ENCODE measurements at regions of chr15 and their contacts with region 1.

Region 1: DNA sequence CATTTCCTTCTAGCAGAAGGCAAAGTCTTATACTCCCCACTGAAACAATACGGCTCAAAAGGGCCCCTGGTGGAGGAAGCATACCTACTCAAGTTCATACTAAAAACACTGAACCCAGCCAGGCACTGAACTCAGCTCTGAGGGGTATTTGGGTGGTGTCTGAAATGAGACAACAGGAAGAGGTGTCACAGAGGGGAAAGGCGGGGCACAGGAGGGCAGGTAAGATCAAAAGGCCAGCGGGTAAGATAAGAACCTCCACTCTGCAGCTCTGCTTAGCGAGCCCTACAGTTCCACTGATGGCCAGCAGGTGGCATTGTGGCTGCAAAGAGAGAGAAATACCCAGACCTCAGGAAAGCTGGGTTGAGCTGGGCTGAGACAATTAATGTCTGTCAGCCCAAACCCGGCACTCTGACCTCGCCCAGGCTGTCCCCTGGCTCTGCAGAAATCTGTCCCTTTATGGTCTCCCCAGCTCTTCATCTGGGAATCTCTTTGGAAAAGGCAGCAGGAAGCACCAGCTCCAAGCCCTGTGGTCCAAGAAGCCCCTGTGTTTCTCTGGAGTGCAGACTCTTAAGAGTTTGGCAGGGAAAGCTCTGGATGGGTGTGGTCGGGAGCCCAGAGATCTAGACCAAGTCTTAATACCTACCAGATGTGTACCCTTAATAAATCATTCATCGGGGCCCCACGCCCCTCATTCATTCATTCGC is 8.4 kb downstream of the MFGE8 start:
- DNase-seq: peak; percentile 94 to 99 (median 97)
- H3K4me3 ChIP-seq: peak overlapping the region in 1 of 2 donors; percentile 13
- H3K4me3 Mint-ChIP-seq: peak overlapping the region; percentile 25 to 81 (median 58)
- H3K27ac ChIP-seq: peak overlapping the region; percentile 77
- H3K27ac Mint-ChIP-seq: peak overlapping the region; percentile 94 to 98 (median 96)
- H3K4me1 ChIP-seq: peaks cover 38% of the 10 kb centered on the region
- H3K4me1 Mint-ChIP-seq: peaks cover 27 to 65% (median 47%) of the 10 kb centered on the region in 4 donors
- H3K27me3 ChIP-seq: no peaks in the 10 kb centered on the region
- H3K27me3 Mint-ChIP-seq: no peaks in the 10 kb centered on the region

Region 2: DNA sequence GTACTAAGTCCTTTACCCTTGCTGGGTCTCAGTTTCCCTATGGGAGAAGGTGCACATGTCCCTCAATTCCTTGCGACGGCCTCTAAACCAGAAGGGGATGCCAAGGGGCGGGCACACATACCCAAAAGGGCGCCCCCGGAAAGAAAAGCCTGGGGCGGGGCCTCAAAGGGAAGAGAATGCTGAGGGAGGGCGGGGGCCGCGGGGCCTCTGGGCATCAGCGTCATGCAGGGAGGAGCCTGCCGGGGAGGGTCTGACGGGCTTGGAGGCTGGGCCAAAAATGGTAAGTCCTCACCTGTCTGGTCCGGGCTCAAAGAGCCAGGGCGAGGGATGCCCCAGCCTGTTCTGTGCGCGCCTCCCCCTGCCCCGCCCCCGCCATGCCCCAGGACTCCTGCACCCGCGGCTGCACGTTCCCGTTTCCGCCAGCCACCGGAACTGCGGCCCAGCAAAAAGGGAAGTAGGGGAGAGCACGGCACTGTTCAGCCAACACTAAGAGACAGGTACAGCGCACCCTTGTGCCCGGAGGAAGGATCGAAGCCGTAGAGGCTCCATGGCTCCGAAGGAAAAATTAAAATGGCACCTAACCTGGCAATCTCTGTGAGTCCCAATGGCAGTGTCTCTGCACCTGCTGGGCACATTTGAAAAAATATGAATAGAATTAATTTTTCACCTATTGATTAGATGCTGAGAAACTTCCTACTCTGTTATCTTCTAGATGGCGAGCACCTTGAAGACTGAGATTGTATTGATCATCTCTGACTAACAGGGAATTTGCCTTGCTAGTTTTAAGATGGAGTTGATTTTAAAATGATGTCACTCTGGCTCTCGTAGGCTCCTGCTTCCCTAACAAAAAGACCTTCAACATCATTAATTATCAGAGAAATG is 358.3 kb before region 1 on chr15 and contains the start of gene DET1:
- CTCF ChIA-PET with region 1: no interaction called
- POLR2A ChIA-PET with region 1: no interaction called
- intact Hi-C with region 1: loop called (anchors 1 kb)
- DNase-seq: peak; percentile 92 to 97 (median 94)
- H3K4me3 ChIP-seq: peak within 1 kb of the TSS; percentile 34 to 63
- H3K4me3 Mint-ChIP-seq: peak within 1 kb of the TSS; percentile 92 to 95 (median 92)
- H3K27ac ChIP-seq: peak within 1 kb of the TSS; percentile 62
- H3K27ac Mint-ChIP-seq: peak within 1 kb of the TSS; percentile 86 to 97 (median 97)
- H3K4me1 ChIP-seq: peaks cover 9% of the 10 kb centered on the region
- H3K4me1 Mint-ChIP-seq: peaks cover 4 to 23% (median 8%) of the 10 kb centered on the region in 4 donors
- H3K27me3 ChIP-seq: no peaks in the 10 kb centered on the region
- H3K27me3 Mint-ChIP-seq: no peaks in the 10 kb centered on the region
- total RNA-seq, gene DET1: 11.5 to 11.7 TPM

Region 3: DNA sequence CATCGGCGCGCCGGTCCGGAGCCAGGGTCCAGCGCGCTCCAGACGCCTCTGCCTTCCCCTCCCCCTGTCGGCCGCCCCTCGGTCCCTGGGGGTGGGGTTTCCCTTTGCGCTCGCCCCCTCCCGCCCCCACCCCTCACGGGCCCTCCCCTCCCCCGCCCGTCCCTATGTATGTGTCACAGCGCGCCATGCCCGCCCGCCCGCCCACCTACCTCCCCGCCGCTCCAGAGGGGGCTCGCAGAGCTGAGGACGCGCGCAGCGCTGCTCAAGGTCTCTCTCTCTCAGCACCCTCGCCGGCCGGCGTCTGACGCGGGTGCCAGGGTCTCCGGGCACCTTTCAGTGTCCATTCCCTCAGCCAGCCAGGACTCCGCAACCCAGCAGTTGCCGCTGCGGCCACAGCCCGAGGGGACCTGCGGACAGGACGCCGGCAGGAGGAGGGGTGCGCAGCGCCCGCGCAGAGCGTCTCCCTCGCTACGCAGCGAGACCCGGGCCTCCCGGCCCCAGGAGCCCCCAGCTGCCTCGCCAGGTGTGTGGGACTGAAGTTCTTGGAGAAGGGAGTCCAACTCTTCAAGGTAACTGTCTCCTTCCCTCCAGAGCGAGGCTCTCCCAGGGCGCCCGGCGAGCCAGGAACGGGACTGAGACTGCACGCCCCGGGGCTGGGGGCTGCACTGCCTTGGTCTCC is 101.4 kb before region 1 on chr15 and contains the start of gene ACAN:
- CTCF ChIA-PET with region 1: no interaction called
- POLR2A ChIA-PET with region 1: no interaction called
- intact Hi-C with region 1: no loop called
- DNase-seq: no peak
- H3K4me3 ChIP-seq: no peak within 1 kb of the TSS
- H3K4me3 Mint-ChIP-seq: peak within 1 kb of the TSS in 7 of 8 donors; percentile 43 to 89 (median 71)
- H3K27ac ChIP-seq: no peak within 1 kb of the TSS
- H3K27ac Mint-ChIP-seq: no peak within 1 kb of the TSS
- H3K4me1 ChIP-seq: no peaks in the 10 kb centered on the region
- H3K4me1 Mint-ChIP-seq: peaks cover 5 to 14% (median 9%) of the 10 kb centered on the region in 4 donors
- H3K27me3 ChIP-seq: peaks cover 5% of the 10 kb centered on the region
- H3K27me3 Mint-ChIP-seq: peaks cover 44 to 47% of the 10 kb centered on the region in 2 donors
- total RNA-seq, gene ACAN: not detected

Region 4: DNA sequence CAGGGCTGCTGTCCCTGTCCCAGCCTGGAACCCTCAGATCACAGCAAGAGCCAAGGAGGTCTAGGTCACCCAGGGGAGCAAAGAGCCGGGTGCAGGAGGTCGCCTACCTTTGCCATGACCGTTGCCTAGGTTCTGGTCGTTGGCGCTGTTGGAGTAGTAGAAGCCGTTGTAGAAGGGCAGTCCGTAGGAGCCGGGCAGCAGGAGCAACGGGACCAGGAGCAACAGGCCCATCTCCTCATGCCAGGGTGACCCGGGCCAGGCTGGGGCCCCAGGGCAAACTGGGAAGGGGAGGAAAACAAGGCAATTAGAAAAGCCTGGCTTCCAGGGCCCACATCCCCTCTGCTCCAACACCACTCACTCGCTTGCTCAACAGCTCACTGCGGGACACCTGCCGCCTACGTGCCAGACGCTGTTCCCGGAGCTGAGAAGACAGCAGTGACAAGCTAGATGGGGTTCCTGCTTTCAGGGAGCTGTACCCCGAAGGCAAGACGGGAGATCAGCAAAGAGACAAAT is 17.7 kb before region 1 on chr15:
- CTCF ChIA-PET with region 1: interaction called, 171 read pairs
- POLR2A ChIA-PET with region 1: interaction called, 78 read pairs
- intact Hi-C with region 1: no loop called
- DNase-seq: no peak
- H3K4me3 ChIP-seq: no peak overlapping the region
- H3K4me3 Mint-ChIP-seq: peak overlapping the region in 1 of 8 donors; percentile 9
- H3K27ac ChIP-seq: no peak overlapping the region
- H3K27ac Mint-ChIP-seq: peak overlapping the region in 1 of 7 donors; percentile 19
- H3K4me1 ChIP-seq: peaks cover 3% of the 10 kb centered on the region
- H3K4me1 Mint-ChIP-seq: peaks cover 5 to 27% (median 10%) of the 10 kb centered on the region in 4 donors
- H3K27me3 ChIP-seq: no peaks in the 10 kb centered on the region
- H3K27me3 Mint-ChIP-seq: no peaks in the 10 kb centered on the region

Region 5: GRCh38 chr15:89017370-89018066 is 112.7 kb after region 1 on chr15:
- CTCF ChIA-PET with region 1: interaction called, 106 read pairs
- POLR2A ChIA-PET with region 1: interaction called, 20 read pairs
- intact Hi-C with region 1: loop called (anchors 1 kb)
- DNase-seq: peak; percentile 80 to 84 (median 83)
- H3K4me3 ChIP-seq: peak overlapping the region in 1 of 2 donors; percentile 21
- H3K4me3 Mint-ChIP-seq: peak overlapping the region; percentile 17 to 75 (median 71)
- H3K27ac ChIP-seq: no peak overlapping the region
- H3K27ac Mint-ChIP-seq: peak overlapping the region; percentile 38 to 89 (median 72)
- H3K4me1 ChIP-seq: peaks cover 14% of the 10 kb centered on the region
- H3K4me1 Mint-ChIP-seq: peaks cover 13 to 19% (median 14%) of the 10 kb centered on the region in 4 donors
- H3K27me3 ChIP-seq: no peaks in the 10 kb centered on the region
- H3K27me3 Mint-ChIP-seq: peaks cover 0 to 1% of the 10 kb centered on the region in 2 donors

Region 6: DNA sequence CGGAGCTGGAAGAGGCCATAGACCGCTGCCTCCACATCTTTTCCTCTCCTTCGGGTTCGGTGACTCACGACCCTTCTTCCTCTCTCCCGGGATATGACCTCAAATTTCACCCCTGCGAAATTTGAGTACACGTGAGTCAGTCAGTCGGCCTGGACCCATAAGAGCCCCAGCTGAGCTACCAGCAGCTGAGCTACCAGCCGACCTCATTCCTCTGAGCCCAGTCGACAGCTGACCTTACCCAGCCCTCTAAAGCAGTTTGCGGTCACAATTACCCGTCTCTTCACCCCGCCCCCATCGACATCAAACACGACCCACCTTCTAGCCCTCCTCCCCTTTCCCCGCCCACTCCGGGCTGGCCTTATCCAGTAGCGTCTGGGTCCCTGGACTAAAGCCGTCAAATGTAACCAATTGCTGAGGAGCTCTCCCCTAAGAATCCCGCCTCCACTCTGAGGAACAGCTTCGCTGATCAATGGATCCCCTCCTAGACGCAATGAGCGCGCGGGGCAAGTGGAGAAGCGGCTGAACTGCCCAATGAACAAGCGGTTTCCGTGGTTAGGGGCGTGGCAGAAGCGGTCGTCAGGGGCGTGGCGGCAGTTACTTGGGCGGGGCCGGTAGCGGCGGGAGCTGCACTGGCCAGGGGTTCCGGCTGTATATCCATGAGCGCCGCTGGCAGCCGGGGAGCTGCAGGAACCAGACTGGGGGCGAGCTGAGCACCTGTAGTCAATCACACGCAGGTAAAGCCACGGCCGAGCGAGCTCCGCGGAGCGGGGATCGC is 183.2 kb after region 1 on chr15 and contains the start of gene ABHD2:
- CTCF ChIA-PET with region 1: interaction called, 36 read pairs
- POLR2A ChIA-PET with region 1: interaction called, 19 read pairs
- intact Hi-C with region 1: no loop called
- DNase-seq: peak; percentile 98 to 99 (median 98)
- H3K4me3 ChIP-seq: peak within 1 kb of the TSS; percentile 49 to 89
- H3K4me3 Mint-ChIP-seq: no peak within 1 kb of the TSS
- H3K27ac ChIP-seq: peak within 1 kb of the TSS; percentile 75
- H3K27ac Mint-ChIP-seq: peak within 1 kb of the TSS in 6 of 7 donors; percentile 57 to 98 (median 94)
- H3K4me1 ChIP-seq: peaks cover 38% of the 10 kb centered on the region
- H3K4me1 Mint-ChIP-seq: peaks cover 24 to 38% (median 32%) of the 10 kb centered on the region in 4 donors
- H3K27me3 ChIP-seq: no peaks in the 10 kb centered on the region
- H3K27me3 Mint-ChIP-seq: no peaks in the 10 kb centered on the region
- total RNA-seq, gene ABHD2: 65.4 to 68.9 TPM

Region 7: GRCh38 chr15:89177633-89178306 is 273.0 kb after region 1 on chr15:
- CTCF ChIA-PET with region 1: interaction called, 13 read pairs
- POLR2A ChIA-PET with region 1: no interaction called
- intact Hi-C with region 1: no loop called
- DNase-seq: peak; percentile 45 to 64 (median 55)
- H3K4me3 ChIP-seq: no peak overlapping the region
- H3K4me3 Mint-ChIP-seq: no peak overlapping the region
- H3K27ac ChIP-seq: no peak overlapping the region
- H3K27ac Mint-ChIP-seq: peak overlapping the region in 4 of 7 donors; percentile 20 to 48 (median 30)
- H3K4me1 ChIP-seq: no peaks in the 10 kb centered on the region
- H3K4me1 Mint-ChIP-seq: peaks cover 4 to 8% (median 7%) of the 10 kb centered on the region in 4 donors
- H3K27me3 ChIP-seq: no peaks in the 10 kb centered on the region
- H3K27me3 Mint-ChIP-seq: no peaks in the 10 kb centered on the region

Measured in CD4-positive, alpha-beta memory T cell (primary cell).